ENCODE measurements at regions of chr1 and their contacts with region 1.

Region 1: DNA sequence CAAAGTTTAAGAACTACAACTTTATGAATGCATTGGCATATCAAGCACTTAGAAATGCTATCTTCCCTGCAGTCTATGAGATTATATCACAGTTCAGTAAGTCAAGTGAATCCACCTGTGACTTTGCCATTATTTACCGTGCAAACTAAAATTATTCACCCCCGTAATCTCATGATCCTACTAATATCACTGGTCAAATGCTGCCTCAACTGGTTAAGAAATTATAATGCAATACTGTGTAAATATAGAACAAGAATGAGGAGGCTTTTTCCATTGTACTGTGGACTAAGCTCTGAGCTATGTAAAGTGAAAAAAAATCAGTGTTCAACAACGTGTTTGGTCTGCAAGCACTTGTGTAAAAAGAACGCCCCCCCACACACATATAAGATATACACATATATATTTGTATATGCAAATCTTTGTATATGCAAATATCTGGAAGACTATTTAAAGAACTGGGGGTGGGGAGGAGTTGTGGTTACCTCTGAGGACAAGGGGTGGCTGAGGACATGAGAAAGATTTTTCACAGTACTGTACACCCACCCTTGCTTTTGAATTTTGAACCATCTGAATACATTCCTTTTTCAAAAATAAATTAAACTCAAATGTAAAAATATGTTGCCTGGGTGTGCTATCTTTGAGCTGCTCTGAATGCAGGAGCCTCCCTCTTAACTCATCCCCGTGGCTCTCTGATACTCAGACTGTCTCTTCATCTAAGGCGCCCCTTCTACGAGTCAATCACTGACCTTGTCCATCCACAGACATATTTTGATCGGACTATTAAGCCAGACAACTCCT is 57.1 kb downstream of the PTP4A2 start:
- DNase-seq: peak; percentile 57
- ATAC-seq: peak; percentile 61
- H3K4me3 ChIP-seq: peak overlapping the region in 3 of 5 experiments; percentile 13 to 34 (median 20)
- H3K4me3 Mint-ChIP-seq: peak overlapping the region; percentile 68
- H3K27ac ChIP-seq: no peak overlapping the region
- H3K27ac Mint-ChIP-seq: peak overlapping the region; percentile 33
- H3K4me1 ChIP-seq: peaks cover 37 to 48% of the 10 kb centered on the region in 2 donors
- H3K4me1 Mint-ChIP-seq: peaks cover 43% of the 10 kb centered on the region
- H3K27me3 ChIP-seq: no peaks in the 10 kb centered on the region
- H3K27me3 Mint-ChIP-seq: no peaks in the 10 kb centered on the region
- CTCF ChIP-seq: no peak

Region 2: DNA sequence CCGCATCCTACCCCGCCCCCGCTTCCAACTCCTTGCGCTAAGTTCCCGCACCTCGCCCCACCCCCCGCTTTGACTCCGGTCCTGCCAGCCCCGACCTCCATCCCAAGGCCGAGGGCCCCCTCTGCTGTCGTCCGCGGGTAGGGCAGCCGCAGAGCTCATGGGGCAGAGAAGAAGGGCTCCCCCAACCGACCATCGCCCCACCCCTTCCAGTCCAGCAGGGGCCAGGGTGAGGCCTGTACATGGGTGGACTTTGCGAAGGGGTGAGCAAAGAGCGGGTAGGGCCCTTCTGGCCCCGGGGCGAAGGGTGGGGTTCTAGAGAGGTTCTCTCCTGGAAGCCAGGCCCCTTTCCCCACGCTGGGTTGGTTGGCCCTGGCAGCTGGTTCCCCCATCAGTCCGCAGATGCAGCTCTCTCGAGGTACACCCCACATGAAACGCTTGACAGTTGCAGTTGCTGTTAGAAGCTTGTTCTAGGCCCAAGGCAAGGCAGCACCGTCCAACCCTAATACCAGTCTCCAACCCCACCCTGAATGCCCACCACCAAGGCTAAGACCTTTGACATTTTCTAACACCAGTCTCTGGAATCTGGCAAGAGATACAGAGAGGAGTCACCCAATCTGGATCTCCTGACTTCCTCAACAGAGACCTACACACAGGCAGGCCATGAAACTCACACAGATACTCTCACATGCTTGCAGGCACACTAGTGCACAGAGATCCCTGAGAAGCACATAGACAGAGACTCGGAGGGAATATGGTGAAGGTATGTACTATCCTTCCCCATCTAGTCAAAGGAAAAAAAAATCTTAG is 91.6 kb before region 1 on chr1:
- CTCF ChIA-PET with region 1: no interaction called
- POLR2A ChIA-PET with region 1: no interaction called
- intact Hi-C with region 1: no loop called
- DNase-seq: peak; percentile 93
- ATAC-seq: peak; percentile 76
- H3K4me3 ChIP-seq: peak overlapping the region in 4 of 5 experiments; percentile 61 to 91 (median 76)
- H3K4me3 Mint-ChIP-seq: peak overlapping the region; percentile 96
- H3K27ac ChIP-seq: peak overlapping the region; percentile 73 to 88
- H3K27ac Mint-ChIP-seq: peak overlapping the region; percentile 98
- H3K4me1 ChIP-seq: peaks cover 26 to 34% of the 10 kb centered on the region in 2 donors
- H3K4me1 Mint-ChIP-seq: peaks cover 35% of the 10 kb centered on the region
- H3K27me3 ChIP-seq: peaks cover 0 to 3% (median 0%) of the 10 kb centered on the region in 4 experiments
- H3K27me3 Mint-ChIP-seq: peaks cover 3% of the 10 kb centered on the region
- CTCF ChIP-seq: peak; percentile 79

Region 3: DNA sequence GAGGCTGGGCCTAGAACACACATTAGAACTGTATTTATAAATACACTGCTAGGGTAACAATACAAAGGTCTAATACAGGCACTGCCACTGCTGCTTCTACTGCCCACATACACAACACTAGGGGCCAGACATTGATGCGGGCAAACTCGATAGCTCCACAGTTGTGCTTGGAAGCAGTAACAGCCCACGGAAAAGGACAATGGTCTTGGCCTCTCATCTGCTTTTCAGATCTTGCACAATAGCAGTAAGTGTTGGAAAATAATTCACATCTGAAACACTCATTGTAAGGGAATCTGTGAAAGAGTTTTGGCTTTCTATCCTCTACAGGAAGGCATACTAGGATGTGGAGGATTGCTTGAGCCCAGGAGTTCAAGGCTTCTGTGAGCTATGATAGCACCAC is 58.3 kb before region 1 on chr1:
- CTCF ChIA-PET with region 1: no interaction called
- POLR2A ChIA-PET with region 1: no interaction called
- intact Hi-C with region 1: loop called (anchors 10 kb)
- DNase-seq: no peak
- ATAC-seq: no peak
- H3K4me3 ChIP-seq: no peak overlapping the region
- H3K4me3 Mint-ChIP-seq: no peak overlapping the region
- H3K27ac ChIP-seq: no peak overlapping the region
- H3K27ac Mint-ChIP-seq: no peak overlapping the region
- H3K4me1 ChIP-seq: peaks cover 16 to 17% of the 10 kb centered on the region in 2 donors
- H3K4me1 Mint-ChIP-seq: peaks cover 18% of the 10 kb centered on the region
- H3K27me3 ChIP-seq: no peaks in the 10 kb centered on the region
- H3K27me3 Mint-ChIP-seq: no peaks in the 10 kb centered on the region
- CTCF ChIP-seq: no peak

Region 4: DNA sequence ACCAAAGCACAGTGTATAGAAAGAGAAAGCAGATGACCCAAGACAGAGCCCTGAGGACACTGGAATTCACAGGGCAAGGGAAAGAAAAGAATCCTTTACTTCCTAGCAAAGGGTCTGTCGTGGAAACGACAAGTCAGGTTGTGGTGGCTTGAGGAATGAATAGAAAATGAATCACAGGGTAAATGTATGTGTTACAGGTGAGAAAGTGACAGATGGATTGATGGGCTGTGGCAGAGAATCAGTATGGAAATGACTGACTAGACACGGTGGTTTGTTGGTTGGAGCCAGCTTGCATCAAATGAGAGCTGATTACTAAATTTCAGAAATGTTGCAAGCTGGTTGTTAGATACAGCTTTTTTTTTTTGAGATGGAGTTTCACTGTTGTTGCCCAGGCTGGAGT is 10.2 kb after region 1 on chr1:
- CTCF ChIA-PET with region 1: interaction called, 3 read pairs
- POLR2A ChIA-PET with region 1: interaction called, 3 read pairs
- intact Hi-C with region 1: loop called (anchors 1 kb)
- DNase-seq: no peak
- ATAC-seq: no peak
- H3K4me3 ChIP-seq: no peak overlapping the region
- H3K4me3 Mint-ChIP-seq: no peak overlapping the region
- H3K27ac ChIP-seq: no peak overlapping the region
- H3K27ac Mint-ChIP-seq: peak overlapping the region; percentile 71
- H3K4me1 ChIP-seq: peaks cover 17 to 18% of the 10 kb centered on the region in 2 donors
- H3K4me1 Mint-ChIP-seq: peaks cover 28% of the 10 kb centered on the region
- H3K27me3 ChIP-seq: no peaks in the 10 kb centered on the region
- H3K27me3 Mint-ChIP-seq: no peaks in the 10 kb centered on the region
- CTCF ChIP-seq: no peak